ENCODE measurements at regions of chr11 and their contacts with region 1.

Region 1: DNA sequence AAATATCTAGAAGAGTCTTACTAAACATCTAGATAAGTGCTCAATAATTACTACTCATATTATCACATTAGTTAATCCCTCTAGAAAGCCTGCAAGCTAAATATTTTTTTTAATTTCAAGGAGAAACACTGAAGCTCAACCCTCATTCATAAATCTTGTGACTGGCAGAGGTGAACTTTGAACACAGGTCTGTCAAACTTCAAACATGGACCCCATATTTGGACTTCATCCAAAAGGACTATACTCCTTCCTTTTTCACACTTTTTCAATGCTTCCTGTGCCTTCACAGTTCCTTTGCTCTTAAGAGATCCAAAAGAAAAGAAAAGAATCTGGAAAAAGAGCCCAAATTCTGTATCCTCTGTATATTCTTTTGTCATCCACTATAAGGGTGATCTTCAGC is 28.3 kb upstream of the OR9G4 start:
- DNase-seq: no peak
- H3K4me3 ChIP-seq: no peak overlapping the region
- H3K27ac ChIP-seq: no peak overlapping the region
- H3K4me1 ChIP-seq: no peaks in the 10 kb centered on the region
- H3K27me3 ChIP-seq: no peaks in the 10 kb centered on the region
- CTCF ChIP-seq: no peak
- POLR2A ChIP-seq: no peak

Region 2: GRCh38 chr11:55942785-55943392 is 833.9 kb before region 1 on chr11:
- intact Hi-C with region 1: loop called (anchors 10 kb)
- DNase-seq: no peak
- H3K4me3 ChIP-seq: no peak overlapping the region
- H3K27ac ChIP-seq: no peak overlapping the region
- H3K4me1 ChIP-seq: no peaks in the 10 kb centered on the region
- H3K27me3 ChIP-seq: no peaks in the 10 kb centered on the region
- CTCF ChIP-seq: peak in 2 of 4 experiments; percentile 20 to 35
- POLR2A ChIP-seq: no peak

Measured in prostate gland (tissue), 2 donors.